Endothelial cell of umbilical vein (primary cell): ENCODE measurements at regions of chr6 and their contacts with region 1.

Region 1: GRCh38 chr6:138403801-138404661 is at the start of gene HEBP2:
- DNase-seq: peak; percentile 86
- H3K4me3 ChIP-seq: peak within 1 kb of the TSS; percentile 51 to 78 (median 76)
- H3K27ac ChIP-seq: peak within 1 kb of the TSS; percentile 76
- H3K4me1 ChIP-seq: peaks cover 11% of the 10 kb centered on the region
- H3K27me3 ChIP-seq: no peaks in the 10 kb centered on the region
- CTCF ChIP-seq: peak; percentile 53 to 66
- POLR2A ChIP-seq: peak; percentile 61
- total RNA-seq, gene HEBP2: 75.3 and 81.2 TPM in 2 replicates

Region 2: DNA sequence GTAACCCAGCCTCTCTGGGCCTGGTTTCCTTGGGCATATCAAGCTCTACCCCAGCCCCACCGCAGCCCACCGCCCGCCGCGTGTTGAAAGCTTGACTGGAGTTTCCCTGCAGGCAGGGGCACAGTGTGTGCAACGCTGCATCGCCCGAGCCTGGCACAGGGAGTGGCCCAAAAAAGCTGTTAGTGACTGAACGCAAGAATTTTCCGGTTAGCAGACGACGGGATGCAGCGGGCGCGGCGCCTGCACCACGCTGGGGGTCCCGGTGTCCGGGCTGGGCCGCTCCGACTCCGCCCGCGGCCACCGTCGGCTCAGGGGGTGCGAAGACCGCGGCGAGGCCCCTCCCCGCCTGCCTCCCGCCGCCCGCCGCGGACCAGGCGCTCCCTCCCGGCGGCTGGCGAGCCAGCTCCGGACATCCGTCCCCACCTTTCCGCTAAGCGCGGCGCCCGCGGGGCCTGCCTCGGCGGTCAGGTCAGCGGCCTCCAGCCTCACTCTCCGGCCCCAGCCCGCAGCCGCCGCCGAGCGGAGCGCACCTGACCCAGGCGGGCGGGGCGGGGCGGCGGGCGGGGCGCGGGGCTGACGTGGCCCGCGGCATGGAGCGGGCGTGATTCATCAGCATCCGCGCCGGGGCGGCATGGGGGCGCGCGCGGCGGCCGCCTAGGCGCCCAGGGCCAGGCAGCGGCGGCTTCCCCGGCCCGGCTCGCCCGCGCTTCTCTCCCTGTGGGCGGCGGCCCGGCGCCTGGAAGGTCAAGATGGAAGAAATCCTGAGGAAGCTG is 242.5 kb before region 1 on chr6 and contains the start of gene ARFGEF3:
- CTCF ChIA-PET with region 1: interaction called, 3 read pairs
- POLR2A ChIA-PET with region 1: no interaction called
- dilution Hi-C with region 1: no loop called
- intact Hi-C with region 1: loop called (anchors 2 kb)
- DNase-seq: peak; percentile 42
- H3K4me3 ChIP-seq: peak within 1 kb of the TSS; percentile 66 to 85 (median 80)
- H3K27ac ChIP-seq: peak within 1 kb of the TSS; percentile 38
- H3K4me1 ChIP-seq: peaks cover 10% of the 10 kb centered on the region
- H3K27me3 ChIP-seq: no peaks in the 10 kb centered on the region
- CTCF ChIP-seq: no peak
- POLR2A ChIP-seq: no peak
- total RNA-seq, gene ARFGEF3: 7.0 and 7.3 TPM in 2 replicates

Region 3: GRCh38 chr6:138287144-138287955 is 116.7 kb before region 1 on chr6:
- CTCF ChIA-PET with region 1: interaction called, 3 read pairs
- POLR2A ChIA-PET with region 1: no interaction called
- dilution Hi-C with region 1: no loop called
- intact Hi-C with region 1: loop called (anchors 2 kb)
- DNase-seq: peak; percentile 29
- H3K4me3 ChIP-seq: no peak overlapping the region
- H3K27ac ChIP-seq: no peak overlapping the region
- H3K4me1 ChIP-seq: peaks cover 3% of the 10 kb centered on the region
- H3K27me3 ChIP-seq: no peaks in the 10 kb centered on the region
- CTCF ChIP-seq: peak; percentile 43 to 67
- POLR2A ChIP-seq: no peak

Region 4: GRCh38 chr6:138372711-138373463 is 31.1 kb before region 1 on chr6:
- CTCF ChIA-PET with region 1: interaction called, 5 read pairs
- POLR2A ChIA-PET with region 1: no interaction called
- dilution Hi-C with region 1: no loop called
- intact Hi-C with region 1: loop called (anchors 2 kb)
- DNase-seq: peak; percentile 79
- H3K4me3 ChIP-seq: no peak overlapping the region
- H3K27ac ChIP-seq: peak overlapping the region; percentile 35
- H3K4me1 ChIP-seq: peaks cover 23% of the 10 kb centered on the region
- H3K27me3 ChIP-seq: no peaks in the 10 kb centered on the region
- CTCF ChIP-seq: peak in 1 of 2 donors; percentile 11
- POLR2A ChIP-seq: no peak

Region 5: GRCh38 chr6:138545621-138545980 is 141.6 kb after region 1 on chr6:
- CTCF ChIA-PET with region 1: no interaction called
- POLR2A ChIA-PET with region 1: no interaction called
- dilution Hi-C with region 1: no loop called
- intact Hi-C with region 1: loop called (anchors 1 kb)
- DNase-seq: peak; percentile 87
- H3K4me3 ChIP-seq: peak overlapping the region in 2 of 3 experiments; percentile 37 to 76
- H3K27ac ChIP-seq: peak overlapping the region; percentile 94
- H3K4me1 ChIP-seq: peaks cover 61% of the 10 kb centered on the region
- H3K27me3 ChIP-seq: no peaks in the 10 kb centered on the region
- CTCF ChIP-seq: no peak
- POLR2A ChIP-seq: peak; percentile 80

Region 6: GRCh38 chr6:138654715-138655634 is 250.9 kb after region 1 on chr6:
- CTCF ChIA-PET with region 1: no interaction called
- POLR2A ChIA-PET with region 1: no interaction called
- dilution Hi-C with region 1: no loop called
- intact Hi-C with region 1: loop called (anchors 5 kb)
- DNase-seq: peak; percentile 82
- H3K4me3 ChIP-seq: peak overlapping the region in 1 of 3 experiments; percentile 20
- H3K27ac ChIP-seq: peak overlapping the region; percentile 75
- H3K4me1 ChIP-seq: peaks cover 30% of the 10 kb centered on the region
- H3K27me3 ChIP-seq: no peaks in the 10 kb centered on the region
- CTCF ChIP-seq: no peak
- POLR2A ChIP-seq: no peak